ENCODE measurements at regions of chr6 and their contacts with region 1.

Region 1: GRCh38 chr6:125191916-125192609 is 38.5 kb downstream of the TPD52L1 start:
- DNase-seq: peak; percentile 85
- H3K4me3 Mint-ChIP-seq: no peak overlapping the region
- H3K27ac Mint-ChIP-seq: no peak overlapping the region
- H3K4me1 Mint-ChIP-seq: peaks cover 2% of the 10 kb centered on the region
- H3K27me3 Mint-ChIP-seq: peaks cover 17% of the 10 kb centered on the region

Region 2: GRCh38 chr6:125301435-125302391 is 109.7 kb after region 1 on chr6 and contains the start of gene HDDC2:
- intact Hi-C with region 1: loop called (anchors 5 kb)
- DNase-seq: peak; percentile 87
- H3K4me3 Mint-ChIP-seq: peak within 1 kb of the TSS; percentile 88
- H3K27ac Mint-ChIP-seq: peak within 1 kb of the TSS; percentile 88
- H3K4me1 Mint-ChIP-seq: peaks cover 37% of the 10 kb centered on the region
- H3K27me3 Mint-ChIP-seq: peaks cover 19% of the 10 kb centered on the region
- total RNA-seq, gene HDDC2: 89.6 and 92.4 TPM in 2 replicates